ENCODE measurements at regions of chr4 and their contacts with region 1.

Region 1: GRCh38 chr4:140861359-140862176 is 105.4 kb upstream of the TBC1D9 start:
- DNase-seq: no peak
- H3K4me3 ChIP-seq: no peak overlapping the region
- H3K27ac ChIP-seq: peak overlapping the region; percentile 39
- H3K4me1 ChIP-seq: peaks cover 28% of the 10 kb centered on the region
- H3K27me3 ChIP-seq: no peaks in the 10 kb centered on the region
- CTCF ChIP-seq: peak; percentile 82

Region 2: DNA sequence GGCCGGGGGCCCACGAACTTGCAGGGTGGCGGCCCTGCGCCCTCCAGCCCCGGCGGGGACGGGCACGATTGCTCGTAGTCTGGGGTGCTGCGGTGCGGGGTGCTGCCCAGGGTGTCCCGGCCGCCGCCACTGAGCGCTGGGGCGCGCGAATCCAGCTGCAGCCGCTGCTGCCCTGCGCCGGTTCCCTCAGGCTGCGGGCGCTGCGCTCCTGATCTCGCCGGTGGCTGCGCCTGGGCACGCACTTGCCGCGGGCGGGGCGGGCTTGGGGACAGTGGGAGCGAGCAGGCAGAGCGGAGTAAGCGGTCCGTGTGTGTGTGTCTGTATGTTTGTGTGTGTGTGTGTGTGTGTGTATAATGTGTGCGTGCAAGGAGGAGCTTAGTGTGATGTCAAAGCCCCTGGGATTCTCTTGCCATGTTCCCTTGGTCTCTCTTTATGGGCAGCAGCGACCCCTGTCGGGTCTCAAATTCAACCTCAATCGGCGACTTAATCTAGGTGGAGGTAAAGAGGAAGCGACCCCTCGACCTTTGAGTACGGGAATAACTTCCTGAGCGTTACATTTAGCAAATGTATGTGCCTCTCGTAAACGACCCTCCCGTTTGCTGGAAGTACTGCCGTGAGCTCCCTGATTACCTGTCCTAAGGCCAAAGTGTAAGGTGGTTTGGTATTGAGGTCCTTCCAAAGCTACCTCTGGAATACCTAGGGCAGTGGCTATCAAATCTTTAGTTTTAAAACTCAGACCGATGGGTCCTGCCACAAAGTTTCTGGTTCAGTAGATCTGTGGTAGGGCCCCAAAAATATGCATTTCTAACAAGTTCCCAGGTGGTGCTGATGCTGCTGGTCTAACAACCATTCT is 271.8 kb after region 1 on chr4 and contains the start of gene RNF150:
- intact Hi-C with region 1: loop called (anchors 5 kb)
- DNase-seq: peak; percentile 72
- H3K4me3 ChIP-seq: peak within 1 kb of the TSS; percentile 94
- H3K27ac ChIP-seq: peak within 1 kb of the TSS; percentile 94
- H3K4me1 ChIP-seq: peaks cover 58% of the 10 kb centered on the region
- H3K27me3 ChIP-seq: peaks cover 28% of the 10 kb centered on the region
- CTCF ChIP-seq: peak; percentile 72
- total RNA-seq, gene RNF150: 68.0 TPM